Esophagus muscularis mucosa (tissue), 4 donors: ENCODE measurements at regions of chr18 and their contacts with region 1.

Region 1: GRCh38 chr18:286515-287310 is 18.9 kb upstream of the THOC1 start:
- DNase-seq: no peak
- H3K4me3 ChIP-seq: no peak overlapping the region
- H3K27ac ChIP-seq: no peak overlapping the region
- H3K4me1 ChIP-seq: no peaks in the 10 kb centered on the region
- H3K27me3 ChIP-seq: no peaks in the 10 kb centered on the region
- CTCF ChIP-seq: peak; percentile 57 to 61 (median 57)
- EP300 ChIP-seq: no peak
- POLR2A ChIP-seq: no peak

Region 2: DNA sequence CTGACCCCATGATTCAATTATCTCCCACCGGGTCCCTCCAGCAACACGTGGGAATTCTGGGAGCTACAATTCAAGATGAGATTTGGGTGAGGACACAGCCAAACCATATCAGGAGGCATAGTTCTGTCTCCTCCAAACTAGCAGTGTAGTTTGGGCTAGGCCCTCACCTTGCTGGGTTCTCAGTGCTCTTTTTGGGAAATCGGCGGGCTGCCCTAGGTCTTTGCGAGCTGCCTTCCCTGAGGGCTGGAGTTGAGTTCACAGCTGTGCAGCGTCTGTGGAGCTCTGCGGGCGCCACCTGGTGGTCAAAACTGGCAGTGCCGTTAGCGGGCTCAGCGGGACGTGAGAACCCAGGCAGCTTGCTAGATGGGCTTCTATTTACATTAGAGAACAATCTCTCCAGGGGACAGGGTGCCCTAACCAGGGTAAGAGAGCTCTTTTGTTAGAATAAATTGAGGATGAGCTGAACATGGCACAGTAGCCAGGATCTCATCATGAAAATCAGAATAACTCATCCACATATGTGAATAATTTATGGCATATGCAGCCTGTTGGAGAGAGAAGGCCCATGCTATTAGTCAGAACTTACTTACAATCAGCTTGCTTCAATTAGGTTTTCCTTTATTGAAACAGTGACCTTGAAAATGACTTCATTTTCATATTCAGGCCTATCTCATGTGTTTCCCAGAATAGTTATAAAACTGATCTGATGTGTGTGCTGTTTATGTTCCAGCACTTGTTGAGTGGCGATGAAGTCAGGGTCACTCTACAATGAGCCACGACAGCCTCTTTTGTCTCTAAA is 552.7 kb after region 1 on chr18:
- intact Hi-C with region 1: loop called (anchors 10 kb)
- DNase-seq: peak; percentile 97
- H3K4me3 ChIP-seq: no peak overlapping the region
- H3K27ac ChIP-seq: no peak overlapping the region
- H3K4me1 ChIP-seq: peaks cover 3 to 13% (median 9%) of the 10 kb centered on the region in 4 donors
- H3K27me3 ChIP-seq: no peaks in the 10 kb centered on the region
- CTCF ChIP-seq: peak in 2 of 3 experiments; percentile 90 to 93
- EP300 ChIP-seq: no peak
- POLR2A ChIP-seq: no peak